Activated B cell treated with CpG ODN at 0.5 μM for 24 hours (primary cell): ENCODE measurements at regions of chr4 and their contacts with region 1.

Region 1: DNA sequence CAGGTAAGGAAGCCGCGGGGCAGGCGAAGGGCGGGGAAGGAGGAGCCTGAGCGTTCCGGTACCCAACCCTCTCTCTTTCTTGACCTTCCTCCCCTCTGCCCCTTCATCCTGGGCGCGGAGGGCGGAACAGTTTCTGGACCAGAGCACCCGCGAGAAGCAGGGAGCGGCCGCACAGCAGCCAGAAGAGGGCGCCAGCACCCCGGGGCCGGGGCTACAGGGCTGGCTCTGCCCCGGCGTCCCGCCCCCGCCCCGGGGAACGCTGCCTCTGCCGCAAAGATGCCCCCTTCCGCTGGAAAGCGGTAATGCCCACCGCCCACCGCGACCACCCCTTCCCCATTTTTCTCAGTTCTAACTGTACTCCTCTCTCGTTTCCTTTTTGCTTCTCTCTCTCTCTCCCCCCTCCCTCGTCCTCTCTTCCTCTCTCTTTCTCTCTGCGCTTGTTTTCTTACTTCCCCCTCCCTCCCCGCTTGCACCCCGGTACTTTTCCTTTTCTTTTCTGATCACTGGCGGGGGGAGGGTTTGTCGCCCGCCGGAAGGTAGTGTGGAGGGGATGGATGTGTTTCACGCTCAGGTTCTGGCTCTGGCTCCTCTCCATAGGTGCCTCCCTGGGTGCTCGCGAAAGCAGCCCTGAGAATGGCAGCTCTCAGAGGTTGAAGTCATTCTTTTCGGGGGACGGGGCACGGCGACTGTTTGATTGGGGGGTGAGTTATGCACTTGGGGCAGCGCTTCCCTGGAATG is 13.1 kb upstream of the PRDM8 start:
- DNase-seq: peak; percentile 93
- ATAC-seq: peak; percentile 81
- H3K4me3 Mint-ChIP-seq: peak overlapping the region; percentile 97
- H3K27ac Mint-ChIP-seq: peak overlapping the region; percentile 95
- H3K4me1 Mint-ChIP-seq: peaks cover 59% of the 10 kb centered on the region
- H3K27me3 Mint-ChIP-seq: no peaks in the 10 kb centered on the region
- CTCF ChIP-seq: peak; percentile 97

Region 2: DNA sequence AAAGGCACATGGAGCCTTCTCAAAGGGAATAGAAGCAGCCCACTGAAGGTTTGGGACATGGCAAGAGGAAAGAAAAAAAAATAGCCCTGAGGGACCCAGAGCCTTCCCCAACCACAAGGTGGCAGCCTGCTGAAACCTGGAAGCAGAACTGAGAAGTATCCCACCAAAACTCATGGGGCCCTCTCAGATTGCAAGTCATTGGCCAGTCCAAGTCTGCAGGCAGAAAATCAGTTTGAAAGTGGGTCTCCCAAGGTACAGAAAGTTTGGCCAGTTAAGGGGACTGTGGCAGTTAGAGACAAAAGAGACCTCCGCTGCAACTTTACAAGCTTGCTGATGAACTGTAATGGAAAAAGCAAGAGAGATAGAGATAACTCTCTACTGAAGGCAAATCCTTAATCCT is 267.0 kb before region 1 on chr4:
- CTCF ChIA-PET with region 1: interaction called, 3 read pairs
- POLR2A ChIA-PET with region 1: no interaction called
- intact Hi-C with region 1: loop called (anchors 1 kb)
- DNase-seq: peak; percentile 25
- ATAC-seq: peak; percentile 68
- H3K4me3 Mint-ChIP-seq: no peak overlapping the region
- H3K27ac Mint-ChIP-seq: no peak overlapping the region
- H3K4me1 Mint-ChIP-seq: peaks cover 4% of the 10 kb centered on the region
- H3K27me3 Mint-ChIP-seq: no peaks in the 10 kb centered on the region
- CTCF ChIP-seq: no peak

Region 3: GRCh38 chr4:80072744-80073472 is 111.3 kb before region 1 on chr4 and contains the start of gene ANTXR2:
- CTCF ChIA-PET with region 1: interaction called, 10 read pairs
- POLR2A ChIA-PET with region 1: interaction called, 32 read pairs
- intact Hi-C with region 1: loop called (anchors 1 kb)
- DNase-seq: peak; percentile 73
- ATAC-seq: peak; percentile 78
- H3K4me3 Mint-ChIP-seq: peak within 1 kb of the TSS; percentile 94
- H3K27ac Mint-ChIP-seq: peak within 1 kb of the TSS; percentile 97
- H3K4me1 Mint-ChIP-seq: peaks cover 56% of the 10 kb centered on the region
- H3K27me3 Mint-ChIP-seq: no peaks in the 10 kb centered on the region
- CTCF ChIP-seq: no peak
- total RNA-seq, gene ANTXR2: 14.2 and 19.6 TPM in 2 replicates

Region 4: DNA sequence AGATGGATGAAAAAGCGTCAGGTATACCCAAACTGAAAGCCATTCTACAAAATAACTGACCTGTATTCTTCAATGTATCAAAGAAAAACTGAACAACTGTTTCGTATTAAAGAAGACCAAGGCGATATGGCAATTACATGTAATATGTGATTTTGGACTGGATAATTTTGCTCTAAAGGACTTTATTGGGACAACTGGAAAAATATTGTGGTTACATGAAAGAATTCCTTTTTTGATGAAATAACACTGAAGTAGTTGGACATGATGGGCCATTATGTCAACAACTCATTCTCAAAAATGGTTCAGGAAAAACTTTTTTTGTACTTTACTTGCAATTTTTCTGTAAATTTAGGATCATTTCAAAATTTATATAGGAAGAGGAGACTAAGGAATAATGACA is 99.1 kb before region 1 on chr4:
- CTCF ChIA-PET with region 1: no interaction called
- POLR2A ChIA-PET with region 1: no interaction called
- intact Hi-C with region 1: no loop called
- DNase-seq: no peak
- ATAC-seq: no peak
- H3K4me3 Mint-ChIP-seq: no peak overlapping the region
- H3K27ac Mint-ChIP-seq: no peak overlapping the region
- H3K4me1 Mint-ChIP-seq: no peaks in the 10 kb centered on the region
- H3K27me3 Mint-ChIP-seq: peaks cover 13% of the 10 kb centered on the region
- CTCF ChIP-seq: no peak

Region 5: DNA sequence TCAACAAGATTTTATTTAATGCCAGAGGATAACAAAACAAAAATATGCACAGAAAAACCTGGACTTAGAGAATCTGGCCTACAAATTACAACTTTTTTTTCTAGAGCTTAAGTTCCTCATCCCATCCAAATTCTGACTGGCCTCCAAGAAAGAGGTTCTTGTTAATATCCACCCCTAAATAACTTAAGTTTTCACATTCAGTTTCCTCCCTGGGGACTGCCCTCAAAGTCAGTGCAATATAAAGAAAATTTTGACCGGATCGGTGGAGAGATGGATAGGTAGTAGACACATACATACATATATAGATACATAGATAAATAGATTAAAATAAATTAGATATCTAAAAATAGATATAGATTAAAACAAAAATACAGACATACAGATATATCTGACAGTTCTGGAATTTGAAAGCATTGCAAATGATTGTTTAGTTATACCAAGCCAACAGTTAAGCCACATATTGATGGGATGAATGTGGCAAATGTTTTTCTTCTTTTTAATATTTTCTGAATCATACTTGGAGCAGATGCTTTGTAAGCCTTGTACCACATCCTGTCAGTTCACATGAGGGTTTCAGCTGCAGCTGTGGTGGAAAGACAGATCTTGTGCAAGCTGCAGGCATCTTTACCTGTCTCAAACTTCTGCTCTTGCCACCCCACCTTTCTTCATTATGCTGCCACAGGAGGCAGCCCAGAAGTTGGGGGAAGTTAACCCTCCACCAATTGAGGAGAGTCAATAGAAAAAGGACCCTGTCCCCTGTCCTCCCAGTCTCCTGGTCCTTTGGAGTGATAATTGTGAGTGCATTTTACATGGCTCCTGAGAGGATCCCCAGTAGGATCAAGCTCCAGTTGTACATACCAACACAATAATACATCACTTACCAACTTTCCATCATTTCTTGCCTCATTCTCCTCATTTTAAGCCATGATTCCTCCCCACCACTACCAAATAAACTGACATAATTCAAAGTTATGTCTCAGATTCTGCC is 45.4 kb before region 1 on chr4:
- CTCF ChIA-PET with region 1: interaction called, 12 read pairs
- POLR2A ChIA-PET with region 1: interaction called, 15 read pairs
- intact Hi-C with region 1: loop called (anchors 1 kb)
- DNase-seq: no peak
- ATAC-seq: peak; percentile 72
- H3K4me3 Mint-ChIP-seq: peak overlapping the region; percentile 21
- H3K27ac Mint-ChIP-seq: peak overlapping the region; percentile 46
- H3K4me1 Mint-ChIP-seq: peaks cover 33% of the 10 kb centered on the region
- H3K27me3 Mint-ChIP-seq: no peaks in the 10 kb centered on the region
- CTCF ChIP-seq: no peak

Region 6: DNA sequence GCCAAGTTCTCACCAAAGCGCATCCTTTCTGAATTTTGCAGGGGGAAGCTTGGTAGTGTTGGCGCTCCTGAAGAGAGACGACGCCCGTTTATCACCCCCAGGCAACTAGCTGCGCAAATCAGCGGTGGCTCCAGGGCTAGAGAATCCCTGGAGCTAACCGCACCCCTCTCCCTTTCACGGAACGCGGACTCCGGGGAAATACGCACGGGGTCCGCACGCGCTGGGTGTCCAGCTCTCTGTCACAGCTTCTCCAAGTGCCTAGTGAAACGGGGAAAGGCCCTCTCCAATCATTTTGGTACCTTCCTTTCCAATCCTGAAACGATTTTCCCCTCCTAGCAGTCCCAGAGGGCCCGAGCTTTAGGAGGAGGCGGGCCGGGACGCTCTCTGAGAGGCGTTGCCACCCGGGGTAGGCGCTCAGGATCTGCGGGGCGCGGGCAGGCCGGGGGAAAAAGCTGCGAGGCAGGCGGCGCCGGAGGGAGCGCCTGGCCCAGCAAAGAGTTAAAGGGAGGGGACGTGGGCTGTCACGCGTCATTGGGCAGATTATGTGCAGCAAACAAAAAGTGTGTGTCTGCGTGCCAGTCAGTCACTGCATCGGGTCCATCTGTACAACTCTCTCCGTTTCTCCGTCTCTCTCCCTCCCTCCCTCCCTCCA is 12.8 kb after region 1 on chr4 and contains the start of gene PRDM8:
- CTCF ChIA-PET with region 1: interaction called, 66 read pairs
- POLR2A ChIA-PET with region 1: interaction called, 61 read pairs
- intact Hi-C with region 1: loop called (anchors 1 kb)
- DNase-seq: no peak
- ATAC-seq: peak; percentile 38
- H3K4me3 Mint-ChIP-seq: peak within 1 kb of the TSS; percentile 75
- H3K27ac Mint-ChIP-seq: peak within 1 kb of the TSS; percentile 59
- H3K4me1 Mint-ChIP-seq: peaks cover 40% of the 10 kb centered on the region
- H3K27me3 Mint-ChIP-seq: peaks cover 12% of the 10 kb centered on the region
- CTCF ChIP-seq: no peak
- total RNA-seq, gene PRDM8: 9.0 and 11.6 TPM in 2 replicates

Region 7: DNA sequence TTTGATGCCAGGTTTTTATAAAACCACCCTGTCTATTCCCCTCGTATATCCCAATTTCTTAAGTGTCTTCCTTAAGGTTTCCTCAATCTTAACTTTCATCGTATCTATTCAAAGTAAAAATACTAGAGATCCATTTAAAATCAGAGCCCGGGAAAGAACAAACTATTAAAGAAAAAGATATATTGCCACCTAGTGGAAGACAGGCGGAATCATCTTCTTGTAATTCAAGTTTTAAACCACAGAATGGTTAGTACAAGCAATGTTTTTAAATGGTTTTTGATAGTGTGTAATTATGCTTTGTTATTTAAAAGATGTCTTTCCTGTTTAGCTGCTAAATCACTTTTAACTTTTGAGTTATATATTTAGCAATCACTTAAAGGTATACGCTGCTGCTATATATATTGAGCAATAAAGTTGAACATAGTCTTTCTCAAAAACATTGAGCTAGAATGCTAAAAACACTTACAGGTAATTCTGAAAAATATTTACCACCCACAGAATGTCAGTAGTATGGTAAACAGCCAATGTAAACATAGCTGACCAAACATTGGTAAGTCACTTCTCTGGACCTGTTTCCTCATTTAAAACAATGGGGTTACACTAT is 31.3 kb after region 1 on chr4:
- CTCF ChIA-PET with region 1: interaction called, 12 read pairs
- POLR2A ChIA-PET with region 1: interaction called, 3 read pairs
- intact Hi-C with region 1: loop called (anchors 1 kb)
- DNase-seq: no peak
- ATAC-seq: no peak
- H3K4me3 Mint-ChIP-seq: no peak overlapping the region
- H3K27ac Mint-ChIP-seq: no peak overlapping the region
- H3K4me1 Mint-ChIP-seq: peaks cover 2% of the 10 kb centered on the region
- H3K27me3 Mint-ChIP-seq: peaks cover 28% of the 10 kb centered on the region
- CTCF ChIP-seq: peak; percentile 86

Region 8: DNA sequence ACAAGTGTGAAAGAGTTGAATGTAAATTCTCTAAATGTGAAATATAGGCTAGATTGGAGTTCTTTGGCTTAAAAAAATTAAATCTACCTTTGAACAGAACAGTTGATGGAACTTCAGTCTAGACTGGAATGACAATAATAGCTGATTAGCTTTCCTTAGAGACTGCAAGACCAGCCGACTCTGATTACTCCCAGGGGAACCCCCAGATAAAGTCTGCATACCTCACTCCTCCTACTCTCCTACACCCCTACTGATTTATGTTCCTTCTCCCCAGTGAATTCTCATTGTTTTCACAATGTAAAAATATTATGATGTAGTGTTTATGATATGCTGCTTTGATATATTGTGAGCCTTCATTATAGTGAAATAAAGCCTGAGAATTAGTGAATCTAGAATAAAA is 392.6 kb after region 1 on chr4:
- CTCF ChIA-PET with region 1: no interaction called
- POLR2A ChIA-PET with region 1: no interaction called
- intact Hi-C with region 1: no loop called
- DNase-seq: no peak
- ATAC-seq: no peak
- H3K4me3 Mint-ChIP-seq: no peak overlapping the region
- H3K27ac Mint-ChIP-seq: no peak overlapping the region
- H3K4me1 Mint-ChIP-seq: peaks cover 3% of the 10 kb centered on the region
- H3K27me3 Mint-ChIP-seq: no peaks in the 10 kb centered on the region
- CTCF ChIP-seq: no peak